PC-3 (cell line): ENCODE measurements at regions of chr2 and their contacts with region 1.

Region 1: GRCh38 chr2:145752091-145752806 is 1232.3 kb upstream of the ZEB2 start:
- DNase-seq: peak; percentile 78
- ATAC-seq: peak; percentile 73
- H3K4me3 ChIP-seq: no peak overlapping the region; the same call in 1 of the 2 replicates
- H3K27ac ChIP-seq: peak overlapping the region; percentile 71
- H3K4me1 ChIP-seq: peaks cover 30% of the 10 kb centered on the region
- H3K27me3 ChIP-seq: no peaks in the 10 kb centered on the region
- CTCF ChIP-seq: peak; percentile 86

Region 2: GRCh38 chr2:144553379-144553778 is 1198.9 kb before region 1 on chr2:
- CTCF ChIA-PET with region 1: no interaction called
- POLR2A ChIA-PET with region 1: no interaction called
- intact Hi-C with region 1: loop called (anchors 10 kb)
- DNase-seq: peak; percentile 92
- ATAC-seq: peak; percentile 88
- H3K4me3 ChIP-seq: no peak overlapping the region
- H3K27ac ChIP-seq: peak overlapping the region; percentile 44
- H3K4me1 ChIP-seq: peaks cover 28% of the 10 kb centered on the region
- H3K27me3 ChIP-seq: no peaks in the 10 kb centered on the region
- CTCF ChIP-seq: no peak

Region 3: GRCh38 chr2:144942516-144943256 is 809.6 kb before region 1 on chr2:
- CTCF ChIA-PET with region 1: interaction called, 4 read pairs
- POLR2A ChIA-PET with region 1: no interaction called
- intact Hi-C with region 1: loop called (anchors 5 kb)
- DNase-seq: peak; percentile 81
- ATAC-seq: peak; percentile 44
- H3K4me3 ChIP-seq: peak overlapping the region; percentile 14
- H3K27ac ChIP-seq: peak overlapping the region; percentile 94
- H3K4me1 ChIP-seq: peaks cover 84% of the 10 kb centered on the region
- H3K27me3 ChIP-seq: no peaks in the 10 kb centered on the region
- CTCF ChIP-seq: no peak

Region 4: DNA sequence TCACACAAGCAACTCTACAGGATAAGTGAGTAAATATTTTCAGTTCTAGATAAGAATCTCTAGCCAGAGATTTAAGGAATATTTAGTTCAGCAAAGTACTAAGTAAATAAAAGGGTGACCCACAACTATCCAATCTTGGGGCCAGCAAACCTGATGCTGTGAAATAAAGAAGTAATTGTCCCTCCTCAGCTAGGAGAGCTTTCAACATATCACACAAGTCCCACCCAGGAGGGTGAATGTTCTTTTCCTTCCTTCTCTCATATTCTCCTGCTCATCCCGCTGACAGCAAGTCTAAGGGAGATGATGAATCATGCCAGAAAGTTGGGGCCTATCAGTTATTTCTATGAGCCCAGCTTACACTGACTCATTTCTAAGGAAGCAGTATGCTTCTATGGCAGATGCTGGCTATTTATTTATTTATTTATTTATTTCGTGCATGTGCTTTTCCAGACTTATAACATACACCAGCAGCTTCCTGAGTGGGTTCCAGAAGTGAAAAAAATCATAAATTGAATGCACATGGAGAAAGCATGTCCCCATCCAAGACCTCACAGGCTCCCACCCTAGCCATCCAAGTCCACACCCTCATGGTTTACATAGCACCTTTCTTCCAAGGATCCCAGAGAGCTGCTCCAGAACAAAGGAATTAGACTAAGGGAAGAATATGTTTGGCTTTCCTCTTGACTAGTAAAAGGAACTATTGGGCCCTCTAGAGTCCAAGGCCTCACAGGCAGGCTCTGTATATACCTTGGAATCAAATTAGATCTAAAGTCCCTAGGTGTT is 158.2 kb before region 1 on chr2:
- CTCF ChIA-PET with region 1: no interaction called
- POLR2A ChIA-PET with region 1: no interaction called
- intact Hi-C with region 1: loop called (anchors 5 kb)
- DNase-seq: peak; percentile 94
- ATAC-seq: peak; percentile 87
- H3K4me3 ChIP-seq: 0 out of 2 replicates have a peak overlapping the region, but pooled peaks have one; percentile 5
- H3K27ac ChIP-seq: peak overlapping the region; percentile 94
- H3K4me1 ChIP-seq: peaks cover 46% of the 10 kb centered on the region
- H3K27me3 ChIP-seq: no peaks in the 10 kb centered on the region
- CTCF ChIP-seq: peak; percentile 50

Region 5: DNA sequence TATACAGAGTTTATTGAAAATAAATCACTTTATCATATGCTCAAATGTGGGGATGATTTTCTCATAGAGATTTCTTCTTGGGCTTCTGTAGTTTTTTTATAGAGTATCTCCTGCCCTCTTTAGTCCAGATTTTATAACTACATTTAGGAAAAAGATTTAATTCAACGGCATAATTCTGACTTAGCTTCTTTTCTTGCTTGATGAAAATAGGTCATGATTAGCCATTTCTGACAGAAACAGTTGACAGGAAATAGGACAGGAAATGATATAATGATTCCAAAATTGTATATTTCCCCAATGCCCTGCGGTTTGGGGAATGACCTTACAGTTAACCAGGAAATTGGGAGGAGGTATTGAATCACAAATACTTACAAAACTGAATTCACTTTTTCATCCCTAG is 560.6 kb after region 1 on chr2:
- CTCF ChIA-PET with region 1: no interaction called
- POLR2A ChIA-PET with region 1: no interaction called
- intact Hi-C with region 1: loop called (anchors 5 kb)
- DNase-seq: peak; percentile 52
- ATAC-seq: peak; percentile 48
- H3K4me3 ChIP-seq: no peak overlapping the region
- H3K27ac ChIP-seq: no peak overlapping the region
- H3K4me1 ChIP-seq: peaks cover 5% of the 10 kb centered on the region
- H3K27me3 ChIP-seq: no peaks in the 10 kb centered on the region
- CTCF ChIP-seq: peak; percentile 63